Activated T-helper 1 cell treated with anti-CD3 and anti-CD28 coated beads, Interleukin-12 subunit alpha, Interleukin-12 subunit beta, Interleukin-2, Interleukin-4 antibody, amounts not matched to agents 30 ng/mL and 10 ng/mL and 1 ng/mL, durations not matched to agents 14 hours and 24 hours and 36 hours (primary cell): ENCODE measurements at regions of chr7 and their contacts with region 1.

Region 1: DNA sequence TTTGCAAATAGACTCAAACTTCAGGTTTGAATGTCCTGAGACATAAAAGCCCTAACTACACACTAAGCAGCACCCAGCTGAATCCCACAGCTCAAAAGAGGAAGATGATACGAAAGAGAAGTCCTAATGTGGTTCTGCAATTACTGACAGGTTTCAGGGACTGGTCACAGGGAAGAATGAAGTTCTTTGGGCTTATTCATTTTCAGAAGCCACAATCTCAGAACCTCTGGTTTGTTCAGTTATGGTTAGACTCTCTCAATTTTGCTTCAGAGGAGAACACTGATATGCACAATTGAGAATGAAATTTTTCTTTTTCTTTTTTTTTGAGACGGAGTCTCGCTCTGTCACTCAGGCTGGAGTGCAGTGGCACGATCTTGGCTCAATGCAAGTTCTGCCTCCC is 94.6 kb upstream of the FAM180A start:
- DNase-seq: no peak
- H3K4me3 Mint-ChIP-seq: no peak overlapping the region
- H3K27ac Mint-ChIP-seq: no peak overlapping the region
- H3K4me1 Mint-ChIP-seq: no peaks in the 10 kb centered on the region
- H3K27me3 Mint-ChIP-seq: peaks cover 4% of the 10 kb centered on the region

Region 2: GRCh38 chr7:134690016-134690415 is 1153.2 kb before region 1 on chr7:
- intact Hi-C with region 1: loop called (anchors 10 kb)
- DNase-seq: no peak
- H3K4me3 Mint-ChIP-seq: no peak overlapping the region
- H3K27ac Mint-ChIP-seq: no peak overlapping the region
- H3K4me1 Mint-ChIP-seq: peaks cover 6% of the 10 kb centered on the region
- H3K27me3 Mint-ChIP-seq: peaks cover 4% of the 10 kb centered on the region

Region 3: DNA sequence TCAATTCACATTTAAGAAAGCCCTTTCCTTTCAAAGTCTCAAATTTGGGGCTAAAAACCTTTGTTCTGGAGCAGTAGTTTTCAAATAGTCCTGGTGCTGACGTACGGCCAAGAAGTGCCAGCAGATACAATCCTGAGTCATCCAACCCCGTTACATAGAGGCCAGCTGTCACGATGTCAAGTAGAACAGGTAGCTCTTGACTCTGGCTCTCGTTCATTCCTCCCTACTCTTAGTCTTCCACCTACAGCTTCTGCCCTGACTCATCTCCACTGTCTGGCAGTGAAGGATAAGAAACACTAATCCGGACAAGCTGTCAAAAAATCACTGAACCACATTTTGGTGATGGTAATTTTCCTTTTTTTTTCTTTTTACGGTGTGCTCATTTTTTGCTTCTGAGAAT is 1632.8 kb after region 1 on chr7:
- intact Hi-C with region 1: no loop called
- DNase-seq: no peak
- H3K4me3 Mint-ChIP-seq: no peak overlapping the region
- H3K27ac Mint-ChIP-seq: no peak overlapping the region
- H3K4me1 Mint-ChIP-seq: no peaks in the 10 kb centered on the region
- H3K27me3 Mint-ChIP-seq: no peaks in the 10 kb centered on the region